ENCODE measurements at regions of chr3 and their contacts with region 1.

Region 1: GRCh38 chr3:66253790-66254620 is 33.2 kb downstream of the SLC25A26 start:
- DNase-seq: no peak
- H3K4me3 Mint-ChIP-seq: no peak overlapping the region
- H3K27ac Mint-ChIP-seq: no peak overlapping the region
- H3K4me1 Mint-ChIP-seq: peaks cover 2% of the 10 kb centered on the region
- H3K27me3 Mint-ChIP-seq: no peaks in the 10 kb centered on the region

Region 2: DNA sequence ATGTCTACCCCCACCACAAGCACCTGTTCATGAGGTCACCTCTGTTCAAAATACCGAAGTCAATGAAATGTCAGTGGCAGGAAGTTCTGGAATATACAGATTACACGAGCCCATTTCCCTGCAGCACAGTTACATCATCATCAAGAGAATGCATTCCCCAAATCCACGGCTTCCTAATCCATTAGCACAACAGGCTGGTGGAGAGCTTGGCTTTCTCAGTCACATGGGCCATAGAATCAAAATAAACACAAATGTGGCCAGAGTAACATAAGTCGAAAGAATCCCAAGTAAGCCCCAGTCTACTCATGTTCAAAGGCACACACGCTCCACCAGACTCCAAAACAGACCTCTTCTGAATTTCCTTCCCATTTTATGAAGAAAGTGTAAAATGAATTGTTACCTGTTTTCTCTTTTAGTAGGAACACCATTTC is 634.5 kb before region 1 on chr3:
- CTCF ChIA-PET with region 1: no interaction called
- POLR2A ChIA-PET with region 1: no interaction called
- DNase-seq: no peak
- H3K4me3 Mint-ChIP-seq: no peak overlapping the region
- H3K27ac Mint-ChIP-seq: no peak overlapping the region
- H3K4me1 Mint-ChIP-seq: no peaks in the 10 kb centered on the region
- H3K27me3 Mint-ChIP-seq: no peaks in the 10 kb centered on the region

Region 3: DNA sequence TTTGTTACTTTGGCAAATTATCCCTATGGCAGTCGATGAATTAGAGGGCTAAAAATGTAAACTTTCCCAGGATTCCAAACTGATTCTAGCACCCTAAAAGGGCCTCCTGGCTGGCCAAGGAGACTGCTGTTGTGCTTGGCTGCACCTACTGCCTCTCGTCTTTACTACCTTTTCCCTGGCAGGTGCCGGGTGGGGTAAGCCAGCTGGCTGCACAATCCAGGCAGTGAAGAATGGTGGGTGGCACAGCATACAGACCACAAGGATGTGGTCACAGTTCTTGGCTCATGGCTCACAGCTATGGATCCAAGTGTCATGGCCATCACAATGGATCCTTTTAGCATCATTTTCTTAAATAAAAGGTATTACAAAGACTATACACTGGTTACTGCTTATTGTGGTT is 53.9 kb before region 1 on chr3:
- CTCF ChIA-PET with region 1: no interaction called
- POLR2A ChIA-PET with region 1: no interaction called
- DNase-seq: no peak
- H3K4me3 Mint-ChIP-seq: no peak overlapping the region
- H3K27ac Mint-ChIP-seq: no peak overlapping the region
- H3K4me1 Mint-ChIP-seq: peaks cover 2% of the 10 kb centered on the region
- H3K27me3 Mint-ChIP-seq: peaks cover 27% of the 10 kb centered on the region

Region 4: DNA sequence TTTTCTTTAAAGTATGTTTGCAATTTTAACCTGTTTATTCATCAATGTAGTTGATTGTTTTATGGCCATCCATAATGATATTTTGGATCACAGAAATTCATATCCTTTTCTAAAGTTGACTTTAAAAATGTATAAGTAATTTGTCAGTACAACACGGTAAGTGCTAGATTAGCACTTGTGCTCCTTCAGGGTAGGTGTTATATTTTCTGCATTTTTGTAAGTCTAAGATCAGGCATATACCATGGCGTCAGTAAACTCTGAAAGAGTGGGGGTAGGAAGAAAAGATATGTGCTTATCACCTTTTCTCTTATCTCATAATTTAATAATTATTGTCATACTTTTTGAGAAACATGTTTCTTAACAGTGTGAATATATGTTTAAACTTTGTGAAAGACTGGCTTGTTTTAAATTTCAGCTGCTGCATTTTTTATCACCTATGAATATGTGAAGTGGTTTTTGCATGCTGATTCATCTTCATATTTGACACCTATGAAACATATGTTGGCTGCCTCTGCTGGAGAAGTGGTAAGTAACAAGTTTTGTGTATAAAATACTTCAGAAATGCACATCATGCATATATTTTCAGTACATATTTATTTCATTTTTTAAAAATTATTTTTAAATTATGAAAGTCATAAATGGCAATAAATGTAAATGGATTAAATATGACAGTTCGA is 11.1 kb before region 1 on chr3:
- CTCF ChIA-PET with region 1: interaction called, 11 read pairs
- POLR2A ChIA-PET with region 1: no interaction called
- DNase-seq: no peak
- H3K4me3 Mint-ChIP-seq: no peak overlapping the region
- H3K27ac Mint-ChIP-seq: no peak overlapping the region
- H3K4me1 Mint-ChIP-seq: peaks cover 17% of the 10 kb centered on the region
- H3K27me3 Mint-ChIP-seq: no peaks in the 10 kb centered on the region

Region 5: DNA sequence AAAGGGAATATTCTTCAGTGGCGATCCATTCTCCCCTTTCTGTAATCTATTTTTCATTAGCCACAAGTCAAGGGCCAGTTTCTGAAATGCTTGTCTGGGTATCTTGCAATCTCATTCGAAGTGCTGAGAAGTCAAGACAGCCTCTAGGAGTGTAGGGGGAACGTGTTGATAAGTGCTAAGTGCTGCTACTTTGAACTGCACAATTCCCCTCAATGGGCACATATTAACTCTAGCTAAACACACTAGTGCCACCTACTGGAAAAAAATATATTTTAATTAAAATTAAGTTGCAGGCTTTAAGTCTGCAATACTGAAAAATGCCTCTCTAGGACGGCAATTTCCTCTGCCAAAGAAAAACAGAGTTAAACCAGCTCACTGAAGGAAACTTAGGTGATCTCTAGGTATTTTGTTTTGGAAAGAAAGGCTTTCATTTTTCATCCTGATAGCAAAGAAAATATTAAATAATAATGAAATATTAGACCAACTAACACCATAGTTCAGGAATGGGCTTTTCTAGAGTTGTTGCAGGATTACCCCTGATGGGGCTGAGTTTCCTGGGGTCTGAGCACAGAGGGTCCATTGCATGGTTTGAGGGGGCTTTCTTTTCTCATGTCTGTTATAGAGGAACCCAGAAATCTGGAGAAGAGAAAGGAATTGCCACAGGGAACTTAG is 562.2 kb after region 1 on chr3:
- CTCF ChIA-PET with region 1: interaction called, 47 read pairs
- POLR2A ChIA-PET with region 1: no interaction called
- DNase-seq: no peak
- H3K4me3 Mint-ChIP-seq: no peak overlapping the region
- H3K27ac Mint-ChIP-seq: no peak overlapping the region
- H3K4me1 Mint-ChIP-seq: no peaks in the 10 kb centered on the region
- H3K27me3 Mint-ChIP-seq: peaks cover 4% of the 10 kb centered on the region

Region 6: GRCh38 chr3:66822186-66823008 is 568.4 kb after region 1 on chr3:
- CTCF ChIA-PET with region 1: interaction called, 47 read pairs
- POLR2A ChIA-PET with region 1: no interaction called
- DNase-seq: peak; percentile 71
- H3K4me3 Mint-ChIP-seq: no peak overlapping the region
- H3K27ac Mint-ChIP-seq: no peak overlapping the region
- H3K4me1 Mint-ChIP-seq: peaks cover 3% of the 10 kb centered on the region
- H3K27me3 Mint-ChIP-seq: peaks cover 2% of the 10 kb centered on the region